Adrenal gland (tissue), 19 donors: ENCODE measurements at regions of chr7 and their contacts with region 1.

Region 1: GRCh38 chr7:12623897-12624498 is 53.5 kb downstream of the SCIN start:
- DNase-seq: no peak
- H3K4me3 ChIP-seq: no peak overlapping the region
- H3K27ac ChIP-seq: no peak overlapping the region
- H3K4me1 ChIP-seq: no peaks in the 10 kb centered on the region
- H3K27me3 ChIP-seq: peaks cover 8% of the 10 kb centered on the region
- CTCF ChIP-seq: peak; percentile 47 to 78 (median 66)
- POLR2A ChIP-seq: no peak

Region 2: GRCh38 chr7:12524794-12525386 is 99.1 kb before region 1 on chr7:
- intact Hi-C with region 1: loop called in 1 of 2 experiments (anchors 5 kb)
- DNase-seq: no peak
- H3K4me3 ChIP-seq: no peak overlapping the region
- H3K27ac ChIP-seq: no peak overlapping the region
- H3K4me1 ChIP-seq: no peaks in the 10 kb centered on the region
- H3K27me3 ChIP-seq: peaks cover 11% of the 10 kb centered on the region
- CTCF ChIP-seq: peak; percentile 49 to 76 (median 62)
- POLR2A ChIP-seq: no peak

Region 3: GRCh38 chr7:12549106-12549505 is 74.9 kb before region 1 on chr7:
- intact Hi-C with region 1: loop called in 1 of 2 experiments (anchors 10 kb)
- DNase-seq: no peak
- H3K4me3 ChIP-seq: no peak overlapping the region
- H3K27ac ChIP-seq: no peak overlapping the region
- H3K4me1 ChIP-seq: no peaks in the 10 kb centered on the region
- H3K27me3 ChIP-seq: no peaks in the 10 kb centered on the region
- CTCF ChIP-seq: no peak
- POLR2A ChIP-seq: no peak